Adrenal gland (tissue), 19 donors: ENCODE measurements at regions of chr16 and their contacts with region 1.

Region 1: GRCh38 chr16:27481282-27481934 is 68.3 kb downstream of the GTF3C1 start:
- DNase-seq: no peak
- H3K4me3 ChIP-seq: no peak overlapping the region
- H3K27ac ChIP-seq: no peak overlapping the region
- H3K4me1 ChIP-seq: peaks cover 0 to 6% of the 10 kb centered on the region in 2 donors
- H3K27me3 ChIP-seq: no peaks in the 10 kb centered on the region
- CTCF ChIP-seq: no peak
- POLR2A ChIP-seq: no peak

Region 2: DNA sequence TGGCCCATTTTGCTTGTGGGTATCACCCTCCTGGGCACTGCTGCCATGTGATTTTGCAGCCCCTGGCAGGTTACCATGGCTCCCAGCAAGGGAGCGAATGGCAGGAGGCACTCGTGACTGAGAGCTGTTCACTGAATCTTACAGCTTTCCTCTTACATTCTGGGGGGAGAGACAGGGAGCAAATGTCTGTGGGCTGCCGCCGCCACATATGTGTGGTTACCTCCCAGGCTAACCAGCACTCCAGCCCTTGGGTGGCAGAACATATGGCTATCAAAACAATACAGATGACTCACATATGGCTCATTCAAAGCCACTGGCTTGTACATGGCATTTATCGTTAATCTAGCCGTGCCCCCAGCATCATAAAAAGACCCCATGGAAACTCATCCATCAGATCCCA is 48.6 kb after region 1 on chr16:
- intact Hi-C with region 1: loop called in 1 of 2 experiments (anchors 10 kb)
- DNase-seq: no peak
- H3K4me3 ChIP-seq: no peak overlapping the region
- H3K27ac ChIP-seq: no peak overlapping the region
- H3K4me1 ChIP-seq: no peaks in the 10 kb centered on the region
- H3K27me3 ChIP-seq: no peaks in the 10 kb centered on the region
- CTCF ChIP-seq: no peak
- POLR2A ChIP-seq: no peak